HEK293T (cell line): ENCODE measurements at regions of chr10 and their contacts with region 1.

Region 1: GRCh38 chr10:26574783-26575182 is 122.7 kb upstream of the PDSS1 start:
- DNase-seq: no peak

Region 2: DNA sequence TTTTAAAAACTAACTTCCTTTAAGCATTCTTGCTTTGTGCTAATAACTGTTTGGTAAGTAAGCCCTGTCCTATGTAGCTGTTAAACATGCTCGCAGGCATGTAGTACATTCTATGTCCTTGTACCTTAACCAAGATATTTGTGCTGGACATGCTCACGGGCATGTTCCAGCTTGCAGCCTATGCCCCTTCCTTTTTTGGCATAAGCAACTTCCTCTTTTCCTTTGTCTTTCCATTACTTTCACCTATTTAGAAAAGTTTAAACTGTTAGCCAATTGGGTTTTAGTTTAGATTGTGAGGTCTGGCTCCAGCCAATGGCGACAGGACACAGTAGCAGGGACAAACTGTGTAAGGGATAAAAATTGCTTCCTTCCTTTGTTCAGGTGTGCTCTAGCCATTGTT is 151.1 kb before region 1 on chr10:
- CTCF ChIA-PET with region 1: no interaction called
- POLR2A ChIA-PET with region 1: no interaction called
- DNase-seq: no peak

Region 3: DNA sequence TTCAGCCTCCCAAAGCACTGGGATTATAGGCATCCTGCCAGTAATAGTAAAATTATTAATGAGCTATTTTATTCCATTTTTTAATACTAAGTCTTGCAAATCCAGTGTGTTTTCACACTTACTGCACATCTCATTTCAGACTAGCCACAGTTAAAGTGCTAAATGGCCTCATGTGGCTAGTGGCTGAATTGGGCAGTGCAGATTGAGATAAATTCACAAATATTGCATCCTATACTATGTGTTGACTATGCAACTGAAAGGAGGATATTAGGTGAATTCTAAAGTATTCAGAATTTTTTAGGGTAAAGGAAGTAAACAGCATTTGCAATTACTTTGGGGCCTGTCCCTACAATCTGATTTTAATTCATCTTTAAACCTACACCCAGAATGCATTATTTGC is 126.5 kb before region 1 on chr10:
- CTCF ChIA-PET with region 1: interaction called, 10 read pairs
- POLR2A ChIA-PET with region 1: no interaction called
- DNase-seq: no peak